AG04450 (cell line): ENCODE measurements at regions of chr6 and their contacts with region 1.

Region 1: GRCh38 chr6:70221025-70221714 is 81.7 kb downstream of the COL9A1 start:
- DNase-seq: no peak
- H3K4me3 ChIP-seq: no peak overlapping the region
- H3K27ac ChIP-seq: no peak overlapping the region
- H3K27me3 ChIP-seq: no peaks in the 10 kb centered on the region
- CTCF ChIP-seq: peak; percentile 69

Region 2: DNA sequence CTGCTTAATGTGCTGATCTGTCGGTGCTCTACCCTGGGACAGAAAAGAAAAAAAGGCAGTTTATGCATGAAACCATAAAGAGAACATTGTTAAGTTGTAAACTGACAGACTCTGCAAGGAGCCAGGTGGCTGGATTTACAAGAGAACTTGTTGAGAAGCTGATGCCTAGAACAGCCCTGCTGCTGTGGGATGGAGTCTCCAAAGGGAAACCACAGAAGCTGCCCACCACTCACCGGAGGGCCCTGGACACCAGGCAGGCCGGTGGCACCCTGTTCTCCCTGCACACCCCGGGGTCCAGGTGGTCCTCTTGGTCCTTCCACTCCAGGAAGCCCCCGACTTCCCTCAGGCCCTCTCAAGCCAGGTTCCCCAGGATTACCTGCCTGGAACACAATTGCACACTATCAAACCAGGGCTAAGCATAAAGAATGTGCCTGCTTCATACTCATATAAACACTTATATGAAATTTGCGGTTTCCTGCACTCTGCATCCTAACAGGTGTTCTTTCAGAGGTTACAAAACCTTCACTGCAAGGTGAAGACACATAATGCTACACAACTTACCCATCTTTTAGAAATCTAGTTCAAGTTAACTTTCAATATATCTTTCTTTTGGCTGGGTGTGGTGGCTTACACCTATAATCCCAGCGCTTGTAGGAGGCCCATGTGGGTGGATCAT is 13.5 kb after region 1 on chr6:
- CTCF ChIA-PET with region 1: interaction called, 58 read pairs
- POLR2A ChIA-PET with region 1: interaction called, 3 read pairs
- DNase-seq: no peak
- H3K4me3 ChIP-seq: no peak overlapping the region
- H3K27ac ChIP-seq: no peak overlapping the region
- H3K27me3 ChIP-seq: no peaks in the 10 kb centered on the region
- CTCF ChIP-seq: no peak

Region 3: DNA sequence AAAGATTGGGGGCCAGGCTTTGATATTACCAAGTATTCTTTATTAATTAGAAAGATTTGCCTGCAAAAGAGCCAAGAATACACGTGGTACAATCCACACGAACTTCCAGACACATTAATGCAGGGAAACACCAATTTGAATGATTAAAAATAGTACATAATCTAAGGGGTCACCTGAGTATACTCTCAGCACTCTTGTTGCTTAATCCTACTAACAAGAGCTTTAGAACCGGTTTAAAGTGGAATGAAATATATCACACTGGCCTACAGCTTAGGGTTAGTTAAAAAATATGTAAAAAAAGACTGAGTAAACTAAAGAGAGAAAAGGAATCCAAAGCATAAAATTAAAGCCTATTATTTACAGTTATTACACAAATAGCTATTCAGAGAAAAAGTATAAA is 32.8 kb after region 1 on chr6:
- CTCF ChIA-PET with region 1: interaction called, 19 read pairs
- POLR2A ChIA-PET with region 1: no interaction called
- DNase-seq: no peak
- H3K4me3 ChIP-seq: no peak overlapping the region
- H3K27ac ChIP-seq: no peak overlapping the region
- H3K27me3 ChIP-seq: no peaks in the 10 kb centered on the region
- CTCF ChIP-seq: no peak

Region 4: GRCh38 chr6:70310063-70310694 is 89.0 kb after region 1 on chr6:
- CTCF ChIA-PET with region 1: interaction called, 22 read pairs
- POLR2A ChIA-PET with region 1: no interaction called
- DNase-seq: no peak
- H3K4me3 ChIP-seq: no peak overlapping the region
- H3K27ac ChIP-seq: no peak overlapping the region
- H3K27me3 ChIP-seq: peaks cover 22% of the 10 kb centered on the region
- CTCF ChIP-seq: peak; percentile 64

Region 5: DNA sequence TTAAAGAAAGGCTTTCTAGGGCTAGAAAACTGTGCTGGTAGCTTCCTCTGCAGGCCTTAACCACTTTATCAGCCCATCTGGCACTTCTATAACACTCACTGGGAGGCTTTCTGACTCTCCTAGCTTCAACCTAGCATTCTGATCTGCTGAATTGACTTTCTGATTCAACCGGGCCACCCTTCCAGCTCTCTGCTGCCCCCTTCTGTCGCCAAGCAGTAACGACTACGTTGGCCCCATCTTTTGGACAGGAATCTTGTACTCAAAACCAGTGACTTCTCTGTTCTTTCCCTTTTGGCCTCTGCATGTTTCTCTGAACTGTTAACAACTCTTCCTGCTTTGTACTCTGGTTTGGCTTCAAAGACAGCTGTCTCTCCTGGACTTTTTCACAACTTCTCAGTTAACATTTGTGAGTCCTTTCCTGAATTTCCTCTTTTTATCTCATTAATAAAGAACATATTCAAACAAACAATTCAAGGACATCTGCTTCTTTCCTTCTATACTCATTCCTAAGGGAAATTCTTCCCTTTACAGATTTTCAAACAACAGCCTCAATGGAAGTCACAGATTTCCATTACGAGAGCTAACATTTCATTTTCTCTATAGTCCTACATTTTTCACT is 148.3 kb after region 1 on chr6:
- CTCF ChIA-PET with region 1: interaction called, 106 read pairs
- POLR2A ChIA-PET with region 1: no interaction called
- DNase-seq: peak; percentile 26
- H3K4me3 ChIP-seq: no peak overlapping the region
- H3K27ac ChIP-seq: no peak overlapping the region
- H3K27me3 ChIP-seq: peaks cover 28% of the 10 kb centered on the region
- CTCF ChIP-seq: peak; percentile 93

Region 6: GRCh38 chr6:70884074-70884983 is 663.2 kb after region 1 on chr6:
- CTCF ChIA-PET with region 1: interaction called, 17 read pairs
- POLR2A ChIA-PET with region 1: no interaction called
- DNase-seq: peak; percentile 1
- H3K4me3 ChIP-seq: no peak overlapping the region
- H3K27ac ChIP-seq: no peak overlapping the region
- H3K27me3 ChIP-seq: peaks cover 6% of the 10 kb centered on the region
- CTCF ChIP-seq: peak; percentile 91

Region 7: GRCh38 chr6:71012866-71013469 is 791.8 kb after region 1 on chr6:
- CTCF ChIA-PET with region 1: interaction called, 25 read pairs
- POLR2A ChIA-PET with region 1: no interaction called
- DNase-seq: no peak
- H3K4me3 ChIP-seq: no peak overlapping the region
- H3K27ac ChIP-seq: no peak overlapping the region
- H3K27me3 ChIP-seq: no peaks in the 10 kb centered on the region
- CTCF ChIP-seq: peak; percentile 84